CD8-positive, alpha-beta T cell (primary cell): ENCODE measurements at regions of chr13 and their contacts with region 1.

Region 1: GRCh38 chr13:54301085-54301484 is 1272.5 kb downstream of the OLFM4 start:
- DNase-seq: no peak
- ATAC-seq: no peak
- H3K4me3 ChIP-seq: no peak overlapping the region
- H3K4me3 Mint-ChIP-seq: no peak overlapping the region
- H3K27ac ChIP-seq: no peak overlapping the region
- H3K27ac Mint-ChIP-seq: no peak overlapping the region
- H3K4me1 ChIP-seq: no peaks in the 10 kb centered on the region
- H3K4me1 Mint-ChIP-seq: no peaks in the 10 kb centered on the region
- H3K27me3 ChIP-seq: no peaks in the 10 kb centered on the region
- H3K27me3 Mint-ChIP-seq: no peaks in the 10 kb centered on the region
- CTCF ChIP-seq: no peak

Region 2: DNA sequence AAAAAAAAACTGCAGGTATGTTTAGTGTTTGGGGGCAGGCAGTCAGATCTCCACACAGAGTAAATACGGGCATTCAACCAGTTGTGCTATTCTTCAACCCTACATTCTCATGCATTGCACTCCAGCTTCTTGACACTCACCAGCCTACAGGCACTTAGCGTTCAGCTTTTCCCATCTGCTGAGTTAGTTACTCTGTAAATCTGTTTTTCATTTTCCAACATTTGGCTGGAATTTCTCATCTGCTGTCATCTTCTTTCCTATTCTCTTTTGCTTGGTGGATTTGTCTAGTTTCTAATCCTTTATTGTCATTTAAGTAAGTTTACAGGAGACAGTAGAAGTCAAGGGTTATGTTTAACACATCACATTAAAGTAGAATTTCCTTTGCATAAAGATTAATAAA is 46.4 kb after region 1 on chr13:
- CTCF ChIA-PET with region 1: no interaction called
- POLR2A ChIA-PET with region 1: no interaction called
- intact Hi-C with region 1: loop called in 1 of 2 experiments (anchors 5 kb)
- DNase-seq: no peak
- ATAC-seq: no peak
- H3K4me3 ChIP-seq: no peak overlapping the region
- H3K4me3 Mint-ChIP-seq: no peak overlapping the region
- H3K27ac ChIP-seq: no peak overlapping the region
- H3K27ac Mint-ChIP-seq: no peak overlapping the region
- H3K4me1 ChIP-seq: no peaks in the 10 kb centered on the region
- H3K4me1 Mint-ChIP-seq: no peaks in the 10 kb centered on the region
- H3K27me3 ChIP-seq: no peaks in the 10 kb centered on the region
- H3K27me3 Mint-ChIP-seq: no peaks in the 10 kb centered on the region
- CTCF ChIP-seq: no peak

Region 3: GRCh38 chr13:54449922-54450321 is 148.8 kb after region 1 on chr13:
- CTCF ChIA-PET with region 1: no interaction called
- POLR2A ChIA-PET with region 1: no interaction called
- intact Hi-C with region 1: no loop called
- DNase-seq: no peak
- ATAC-seq: no peak
- H3K4me3 ChIP-seq: no peak overlapping the region
- H3K4me3 Mint-ChIP-seq: no peak overlapping the region
- H3K27ac ChIP-seq: no peak overlapping the region
- H3K27ac Mint-ChIP-seq: no peak overlapping the region
- H3K4me1 ChIP-seq: no peaks in the 10 kb centered on the region
- H3K4me1 Mint-ChIP-seq: no peaks in the 10 kb centered on the region
- H3K27me3 ChIP-seq: no peaks in the 10 kb centered on the region
- H3K27me3 Mint-ChIP-seq: no peaks in the 10 kb centered on the region
- CTCF ChIP-seq: no peak